ENCODE measurements at regions of chr1 and their contacts with region 1.

Region 1: GRCh38 chr1:156689035-156689952 is 12.1 kb upstream of the NES start:
- DNase-seq: peak; percentile 86 to 92
- ATAC-seq: peak; percentile 88 to 93
- H3K4me3 ChIP-seq: peak overlapping the region; percentile 36
- H3K27ac ChIP-seq: peak overlapping the region; percentile 57 to 78; a peak in 5 of 6 replicates
- H3K4me1 ChIP-seq: peaks cover 55% of the 10 kb centered on the region
- CTCF ChIP-seq: peak; percentile 77
- EP300 ChIP-seq: no peak
- POLR2A ChIP-seq: no peak
- RAD21 ChIP-seq: peak; percentile 91 to 97

Region 2: DNA sequence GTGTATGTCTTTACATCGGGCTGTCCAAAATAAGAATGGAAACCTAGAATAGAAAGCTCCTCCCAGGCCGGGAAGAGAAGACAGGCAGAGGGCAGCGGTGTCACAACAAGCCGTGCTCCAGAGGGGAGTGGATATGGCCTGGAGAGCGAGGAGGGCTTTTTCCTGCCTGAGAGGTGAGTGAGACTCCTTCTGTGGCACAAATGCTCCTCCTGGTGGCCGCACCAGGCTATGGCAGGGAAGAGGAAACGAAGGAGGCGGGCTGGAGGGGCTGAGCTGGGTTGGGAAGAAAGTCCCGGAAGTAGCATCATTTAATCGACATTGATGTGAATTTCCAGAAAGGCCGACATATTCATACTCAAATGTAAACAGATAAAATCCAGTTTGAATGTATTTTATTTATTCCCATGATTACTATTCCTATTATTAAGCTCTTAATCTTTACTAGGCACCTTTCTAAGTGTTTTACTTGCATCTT is 243.5 kb before region 1 on chr1:
- CTCF ChIA-PET with region 1: no interaction called
- POLR2A ChIA-PET with region 1: no interaction called
- DNase-seq: peak; percentile 87 to 90
- ATAC-seq: peak; percentile 92 to 95
- H3K4me3 ChIP-seq: no peak overlapping the region
- H3K27ac ChIP-seq: peak overlapping the region; percentile 54 to 71; a peak in 5 of 6 replicates
- H3K4me1 ChIP-seq: 0 out of 3 replicates have a peak, but pooled peaks cover 3% of the 10 kb centered on the region
- CTCF ChIP-seq: peak; percentile 92
- EP300 ChIP-seq: no peak
- POLR2A ChIP-seq: no peak
- RAD21 ChIP-seq: peak; percentile 92 to 96

Region 3: GRCh38 chr1:156601122-156601830 is 88.0 kb before region 1 on chr1 and contains the start of gene GPATCH4:
- CTCF ChIA-PET with region 1: no interaction called
- POLR2A ChIA-PET with region 1: no interaction called
- DNase-seq: peak; percentile 89 to 92
- ATAC-seq: peak; percentile 86 to 87
- H3K4me3 ChIP-seq: peak within 1 kb of the TSS; percentile 77
- H3K27ac ChIP-seq: peak within 1 kb of the TSS; percentile 86 to 94
- H3K4me1 ChIP-seq: peaks cover 19% of the 10 kb centered on the region
- CTCF ChIP-seq: no peak
- EP300 ChIP-seq: no peak
- POLR2A ChIP-seq: peak; percentile 87
- RAD21 ChIP-seq: no peak
- polyA plus RNA-seq, gene GPATCH4: 68.1 and 76.1 TPM in 2 replicates

Region 4: GRCh38 chr1:156625436-156626078 is 63.7 kb before region 1 on chr1:
- CTCF ChIA-PET with region 1: interaction called, 495 read pairs
- POLR2A ChIA-PET with region 1: no interaction called
- DNase-seq: peak in 1 of 2 experiments; percentile 61
- ATAC-seq: peak; percentile 27 to 64
- H3K4me3 ChIP-seq: peak overlapping the region; percentile 49
- H3K27ac ChIP-seq: peak overlapping the region; percentile 3 to 76; a peak in 3 of 6 replicates
- H3K4me1 ChIP-seq: peaks cover 12% of the 10 kb centered on the region
- CTCF ChIP-seq: peak; percentile 80
- EP300 ChIP-seq: no peak
- POLR2A ChIP-seq: no peak
- RAD21 ChIP-seq: peak; percentile 65 to 72

Region 5: GRCh38 chr1:156667610-156667967 is 21.7 kb before region 1 on chr1:
- CTCF ChIA-PET with region 1: interaction called, 203 read pairs
- POLR2A ChIA-PET with region 1: no interaction called
- DNase-seq: no peak
- ATAC-seq: no peak; a peak in 1 of 6 replicates
- H3K4me3 ChIP-seq: no peak overlapping the region
- H3K27ac ChIP-seq: peak overlapping the region in 1 of 2 experiments; percentile 25; a peak in 1 of 6 replicates
- H3K4me1 ChIP-seq: peaks cover 36% of the 10 kb centered on the region
- CTCF ChIP-seq: no peak
- EP300 ChIP-seq: no peak
- POLR2A ChIP-seq: no peak
- RAD21 ChIP-seq: no peak

Region 6: DNA sequence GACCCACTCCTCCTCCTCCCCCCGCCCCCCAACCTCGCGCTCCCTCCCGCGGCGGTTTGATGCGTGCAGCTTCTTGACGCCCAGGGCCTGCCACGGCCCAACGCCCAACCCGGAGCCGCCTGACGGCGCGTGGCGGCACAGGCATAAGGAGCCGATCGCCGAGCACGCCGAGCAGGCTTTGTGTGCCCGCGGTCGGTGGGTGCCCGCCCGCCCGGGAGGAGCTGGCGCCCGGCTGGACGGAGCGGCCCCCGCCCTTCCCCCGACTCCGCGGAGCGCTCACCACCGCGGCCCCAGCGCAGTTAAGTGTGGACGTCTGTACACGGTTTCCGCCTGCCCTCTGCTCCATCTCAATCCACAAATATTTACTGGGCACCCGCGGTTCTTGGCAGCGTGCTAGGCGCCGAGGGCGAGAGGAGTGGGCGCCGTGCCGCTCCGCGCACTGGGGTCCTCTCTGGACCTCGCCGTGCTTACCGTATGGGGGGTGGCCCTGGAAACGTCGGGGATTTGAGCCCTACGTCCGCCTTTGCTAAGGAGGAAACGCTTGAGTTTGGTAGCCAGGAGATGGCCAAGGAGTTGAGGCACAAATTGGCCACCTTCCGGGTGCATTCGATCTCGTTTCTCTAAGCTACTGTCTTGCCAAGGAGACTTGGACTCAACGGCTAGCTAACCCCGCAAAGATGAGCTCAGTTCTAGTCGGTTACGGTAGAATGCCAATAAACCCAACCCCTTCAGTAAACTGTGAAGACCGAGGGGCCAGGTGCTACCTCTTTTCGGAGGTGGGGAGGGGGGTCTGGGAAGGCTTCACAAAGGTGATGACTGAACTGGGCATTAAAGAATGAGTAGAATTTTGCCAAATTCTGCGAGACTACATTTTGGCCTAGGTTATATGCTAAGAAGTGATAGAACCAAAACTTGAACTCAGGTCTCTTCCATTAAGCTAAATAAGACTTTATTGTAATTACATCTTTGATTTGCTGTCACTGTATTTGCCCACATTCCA is 62.8 kb after region 1 on chr1:
- CTCF ChIA-PET with region 1: interaction called, 17 read pairs
- POLR2A ChIA-PET with region 1: no interaction called
- DNase-seq: peak; percentile 83 to 96
- ATAC-seq: peak; percentile 59 to 67
- H3K4me3 ChIP-seq: peak overlapping the region; percentile 92
- H3K27ac ChIP-seq: peak overlapping the region; percentile 99 to 100
- H3K4me1 ChIP-seq: peaks cover 31% of the 10 kb centered on the region
- CTCF ChIP-seq: no peak
- EP300 ChIP-seq: no peak
- POLR2A ChIP-seq: peak; percentile 51; the same call in 1 of the 2 replicates
- RAD21 ChIP-seq: 0 out of 5 replicates have a peak, but pooled peaks have one; percentile 7 to 27

Region 7: GRCh38 chr1:156852418-156852874 is 163.2 kb after region 1 on chr1:
- CTCF ChIA-PET with region 1: interaction called, 27 read pairs
- POLR2A ChIA-PET with region 1: no interaction called
- DNase-seq: peak in 1 of 2 experiments; percentile 27
- ATAC-seq: peak in 1 of 2 experiments; percentile 37; a peak in 3 of 6 replicates
- H3K4me3 ChIP-seq: no peak overlapping the region
- H3K27ac ChIP-seq: no peak overlapping the region
- H3K4me1 ChIP-seq: peaks cover 9% of the 10 kb centered on the region; the same call in 2 of the 3 replicates
- CTCF ChIP-seq: no peak
- EP300 ChIP-seq: no peak
- POLR2A ChIP-seq: no peak
- RAD21 ChIP-seq: no peak

Region 8: DNA sequence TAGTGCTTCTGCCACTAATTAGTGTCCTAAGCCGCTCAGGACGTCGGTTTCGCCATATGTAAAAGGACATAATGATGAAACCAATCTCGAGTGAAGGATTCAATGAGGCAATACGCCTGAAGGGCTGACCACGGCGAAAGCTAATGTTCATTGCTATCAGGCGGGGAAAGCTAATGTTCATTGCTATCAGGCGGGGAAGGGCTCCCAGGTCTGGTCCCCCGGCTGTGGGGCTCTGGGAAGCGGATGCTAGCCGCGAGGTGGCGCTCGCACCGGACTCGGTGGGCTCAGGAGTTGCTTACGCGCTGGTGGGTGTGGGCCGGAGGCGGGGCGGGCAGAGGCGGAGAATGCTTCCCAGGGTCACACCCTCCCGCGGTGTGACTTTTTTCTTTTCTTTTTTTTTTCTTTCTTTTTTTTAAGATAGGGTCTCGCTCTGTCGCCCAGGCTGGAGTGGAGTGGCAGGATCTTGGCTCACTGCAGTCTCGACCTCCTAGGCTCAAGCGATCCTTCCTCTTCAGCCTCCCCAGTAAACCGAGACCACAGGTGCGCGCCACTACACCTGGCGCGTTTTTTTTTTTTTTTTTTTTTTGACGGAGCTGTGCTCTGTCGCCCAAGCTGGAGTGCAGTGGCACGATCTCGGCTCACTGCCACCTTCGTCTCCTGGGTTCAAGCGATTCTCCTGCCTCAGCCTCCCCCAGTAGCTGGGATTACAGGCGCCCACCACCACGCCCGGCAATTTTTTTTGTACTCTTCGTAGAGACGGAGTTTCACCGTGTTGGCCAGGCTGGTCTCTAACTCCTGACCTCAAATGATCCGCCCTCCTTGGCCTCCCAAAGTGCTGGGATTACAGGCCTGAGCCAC is 203.1 kb after region 1 on chr1:
- CTCF ChIA-PET with region 1: interaction called, 130 read pairs
- POLR2A ChIA-PET with region 1: no interaction called
- DNase-seq: peak; percentile 89
- ATAC-seq: peak; percentile 65 to 86
- H3K4me3 ChIP-seq: peak overlapping the region; percentile 19; the same call in 2 of the 3 replicates
- H3K27ac ChIP-seq: peak overlapping the region; percentile 61 to 93; a peak in 5 of 6 replicates
- H3K4me1 ChIP-seq: peaks cover 40% of the 10 kb centered on the region
- CTCF ChIP-seq: peak; percentile 93
- EP300 ChIP-seq: no peak
- POLR2A ChIP-seq: no peak
- RAD21 ChIP-seq: peak; percentile 69 to 83

Measured in A549 (cell line).